ENCODE measurements at regions of chr1 and their contacts with region 1.

Region 1: DNA sequence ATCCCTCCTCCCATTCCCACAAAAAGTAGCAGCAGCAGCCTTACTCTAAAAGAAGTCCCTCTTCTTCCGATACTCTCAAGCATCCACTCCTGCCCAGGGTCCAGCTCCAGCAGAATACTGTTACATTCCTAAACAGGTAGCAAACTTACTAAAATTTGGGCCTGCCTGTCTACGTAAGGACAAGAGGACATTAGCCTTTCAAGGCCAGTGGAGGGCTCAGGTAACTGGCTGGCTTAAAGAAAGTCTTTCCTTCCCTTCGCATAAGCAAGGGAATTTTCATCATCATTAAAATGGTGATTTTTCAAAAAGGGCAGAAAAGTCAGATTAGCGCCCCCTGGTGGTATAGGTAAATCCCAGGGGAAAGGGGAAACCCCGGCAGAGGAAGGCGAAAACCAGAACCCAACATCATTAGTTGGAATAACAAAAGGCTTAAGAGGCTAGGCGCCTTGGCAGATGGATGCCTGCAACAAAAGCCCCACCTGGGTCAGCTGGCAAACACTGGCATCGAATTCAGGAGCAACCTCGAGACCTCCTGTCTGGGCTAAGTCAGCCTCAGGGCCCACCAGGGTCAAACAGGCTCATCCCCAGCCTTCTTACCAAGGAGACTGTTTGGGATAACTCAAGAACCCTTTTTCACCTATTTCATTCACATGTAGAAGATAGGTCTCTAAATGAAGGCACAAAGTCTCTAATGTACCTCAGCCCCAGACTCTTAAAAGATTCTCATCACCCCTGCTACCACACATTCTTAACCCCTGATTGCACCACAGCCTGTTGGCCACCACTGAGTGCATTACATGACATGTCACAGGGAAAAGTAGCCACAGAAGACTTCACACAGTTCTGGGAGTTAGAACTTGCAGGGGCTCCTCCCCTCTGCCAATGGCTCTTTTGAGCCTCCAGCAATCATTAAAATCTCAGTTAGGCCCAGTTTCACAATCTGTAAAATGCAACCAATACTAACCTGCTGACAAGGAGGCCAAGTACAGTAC is 36.7 kb downstream of the ERI3 start:
- DNase-seq: peak in 1 of 2 donors; percentile 19
- H3K4me3 ChIP-seq: no peak overlapping the region
- CTCF ChIP-seq: no peak
- POLR2A ChIP-seq: no peak

Region 2: GRCh38 chr1:44135886-44136285 is 182.5 kb before region 1 on chr1:
- intact Hi-C with region 1: no loop called
- DNase-seq: peak in 1 of 2 donors; percentile 26
- H3K4me3 ChIP-seq: no peak overlapping the region
- CTCF ChIP-seq: no peak
- POLR2A ChIP-seq: no peak

Region 3: DNA sequence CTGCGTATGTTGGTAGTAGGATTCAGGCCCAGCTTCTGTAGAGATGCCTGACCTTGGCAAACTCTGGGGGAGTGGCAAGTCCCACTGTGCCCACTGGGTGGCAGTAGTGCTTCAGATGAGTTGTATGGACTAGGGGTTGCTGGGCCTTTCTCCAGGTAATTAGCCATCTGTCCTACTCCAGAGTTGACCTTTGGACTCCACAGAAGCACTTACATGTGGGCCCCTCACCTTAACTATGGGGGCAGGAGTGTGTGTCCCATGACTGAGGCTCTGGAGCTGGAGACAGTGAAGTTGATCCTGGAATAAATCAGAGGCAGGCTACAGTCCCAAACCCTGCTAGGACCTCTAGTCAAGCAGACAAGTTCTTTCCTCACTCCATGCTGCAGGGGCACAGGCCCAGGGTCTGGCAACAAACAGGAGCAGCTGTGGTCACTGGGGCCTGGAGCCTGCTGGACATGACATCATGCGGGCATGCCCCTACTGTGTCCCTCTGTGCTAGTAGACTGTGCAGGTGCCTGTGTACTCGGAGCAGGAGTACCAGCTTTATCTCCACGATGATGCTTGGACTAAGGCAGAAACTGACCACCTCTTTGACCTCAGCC is 100.5 kb before region 1 on chr1:
- intact Hi-C with region 1: loop called (anchors 10 kb)
- DNase-seq: peak; percentile 77 to 94
- H3K4me3 ChIP-seq: no peak overlapping the region
- CTCF ChIP-seq: peak in 1 of 3 donors; percentile 62
- POLR2A ChIP-seq: no peak